HepG2 (cell line): ENCODE measurements at regions of chr13 and their contacts with region 1.

Region 1: GRCh38 chr13:96822895-96823294 is 171.4 kb downstream of the OXGR1 start:
- DNase-seq: peak; percentile 50
- ATAC-seq: peak; percentile 100
- H3K4me3 ChIP-seq: no peak overlapping the region
- H3K27ac ChIP-seq: no peak overlapping the region
- H3K4me1 ChIP-seq: no peaks in the 10 kb centered on the region
- H3K27me3 ChIP-seq: no peaks in the 10 kb centered on the region; a peak in 1 of 5 replicates
- CTCF ChIP-seq: peak; percentile 83
- EP300 ChIP-seq: no peak
- POLR2A ChIP-seq: no peak
- RAD21 ChIP-seq: peak; percentile 74

Region 2: DNA sequence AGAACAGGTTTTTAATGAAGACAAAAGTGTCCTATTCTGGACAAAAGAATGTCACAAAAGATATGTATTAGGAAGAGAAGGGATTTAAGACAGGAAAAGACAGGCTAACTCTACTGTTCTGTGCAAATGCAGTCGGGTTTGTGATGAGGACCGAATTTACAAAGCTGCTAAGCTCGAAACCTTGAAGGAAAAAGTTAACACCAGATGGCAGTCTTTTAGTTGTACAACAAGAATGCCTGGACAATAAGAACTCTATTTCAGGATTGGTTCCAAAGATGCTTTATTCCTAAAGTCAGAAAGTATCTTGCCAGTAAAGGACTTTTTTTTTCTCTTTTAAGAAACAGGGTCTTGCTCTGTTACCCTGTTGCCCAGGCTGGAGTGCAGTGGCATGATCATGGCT is 681.9 kb before region 1 on chr13:
- CTCF ChIA-PET with region 1: no interaction called
- POLR2A ChIA-PET with region 1: no interaction called
- in situ Hi-C with region 1: loop called (anchors 10 kb)
- intact Hi-C with region 1: loop called (anchors 5 kb)
- DNase-seq: peak; percentile 20
- ATAC-seq: no peak
- H3K4me3 ChIP-seq: no peak overlapping the region
- H3K27ac ChIP-seq: no peak overlapping the region
- H3K4me1 ChIP-seq: no peaks in the 10 kb centered on the region
- H3K27me3 ChIP-seq: no peaks in the 10 kb centered on the region
- CTCF ChIP-seq: peak; percentile 32; the same call in 1 of the 2 replicates
- EP300 ChIP-seq: no peak
- POLR2A ChIP-seq: no peak
- RAD21 ChIP-seq: no peak

Region 3: GRCh38 chr13:96958286-96958891 is 135.5 kb after region 1 on chr13:
- CTCF ChIA-PET with region 1: interaction called, 13 read pairs
- POLR2A ChIA-PET with region 1: no interaction called
- in situ Hi-C with region 1: loop called (anchors 5 kb)
- intact Hi-C with region 1: loop called (anchors 1 kb)
- DNase-seq: peak; percentile 20
- ATAC-seq: peak; percentile 36; the same call in 1 of the 3 replicates
- H3K4me3 ChIP-seq: no peak overlapping the region
- H3K27ac ChIP-seq: no peak overlapping the region
- H3K4me1 ChIP-seq: no peaks in the 10 kb centered on the region
- H3K27me3 ChIP-seq: no peaks in the 10 kb centered on the region
- CTCF ChIP-seq: peak; percentile 56
- EP300 ChIP-seq: no peak
- POLR2A ChIP-seq: no peak
- RAD21 ChIP-seq: no peak

Region 4: DNA sequence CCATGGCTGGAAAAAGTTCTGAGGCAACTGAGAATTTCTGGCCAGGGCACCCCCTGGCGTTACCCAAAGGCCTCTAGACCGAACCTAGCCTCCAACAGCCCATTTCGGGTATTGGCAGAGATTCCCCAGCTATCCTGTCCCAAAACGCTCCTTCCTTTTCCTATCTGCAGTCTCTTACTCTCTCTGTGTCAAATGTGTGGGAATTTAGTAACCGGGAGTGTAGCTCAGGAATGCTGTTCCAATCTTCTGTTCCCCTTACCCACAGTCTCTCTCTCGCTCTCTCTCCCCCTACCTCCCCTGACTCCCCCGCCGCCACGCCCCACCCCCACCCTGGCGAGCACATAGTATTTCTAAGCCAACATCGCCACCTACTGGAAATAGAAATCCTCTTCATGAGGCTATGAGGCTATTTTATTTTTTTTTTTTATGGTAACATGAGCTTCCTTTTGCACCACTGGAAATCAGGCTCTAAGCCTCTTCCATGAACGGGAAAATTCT is 144.4 kb after region 1 on chr13:
- CTCF ChIA-PET with region 1: interaction called, 15 read pairs
- POLR2A ChIA-PET with region 1: no interaction called
- in situ Hi-C with region 1: no loop called
- intact Hi-C with region 1: no loop called
- DNase-seq: peak; percentile 25
- ATAC-seq: peak; percentile 92
- H3K4me3 ChIP-seq: peak overlapping the region in 1 of 3 experiments; percentile 33; a peak in 3 of 6 replicates
- H3K27ac ChIP-seq: no peak overlapping the region
- H3K4me1 ChIP-seq: 0 out of 2 replicates have a peak, but pooled peaks cover 7% of the 10 kb centered on the region
- H3K27me3 ChIP-seq: no peaks in the 10 kb centered on the region; a peak in 2 of 5 replicates
- CTCF ChIP-seq: peak; percentile 52
- EP300 ChIP-seq: no peak
- POLR2A ChIP-seq: no peak
- RAD21 ChIP-seq: no peak

Region 5: DNA sequence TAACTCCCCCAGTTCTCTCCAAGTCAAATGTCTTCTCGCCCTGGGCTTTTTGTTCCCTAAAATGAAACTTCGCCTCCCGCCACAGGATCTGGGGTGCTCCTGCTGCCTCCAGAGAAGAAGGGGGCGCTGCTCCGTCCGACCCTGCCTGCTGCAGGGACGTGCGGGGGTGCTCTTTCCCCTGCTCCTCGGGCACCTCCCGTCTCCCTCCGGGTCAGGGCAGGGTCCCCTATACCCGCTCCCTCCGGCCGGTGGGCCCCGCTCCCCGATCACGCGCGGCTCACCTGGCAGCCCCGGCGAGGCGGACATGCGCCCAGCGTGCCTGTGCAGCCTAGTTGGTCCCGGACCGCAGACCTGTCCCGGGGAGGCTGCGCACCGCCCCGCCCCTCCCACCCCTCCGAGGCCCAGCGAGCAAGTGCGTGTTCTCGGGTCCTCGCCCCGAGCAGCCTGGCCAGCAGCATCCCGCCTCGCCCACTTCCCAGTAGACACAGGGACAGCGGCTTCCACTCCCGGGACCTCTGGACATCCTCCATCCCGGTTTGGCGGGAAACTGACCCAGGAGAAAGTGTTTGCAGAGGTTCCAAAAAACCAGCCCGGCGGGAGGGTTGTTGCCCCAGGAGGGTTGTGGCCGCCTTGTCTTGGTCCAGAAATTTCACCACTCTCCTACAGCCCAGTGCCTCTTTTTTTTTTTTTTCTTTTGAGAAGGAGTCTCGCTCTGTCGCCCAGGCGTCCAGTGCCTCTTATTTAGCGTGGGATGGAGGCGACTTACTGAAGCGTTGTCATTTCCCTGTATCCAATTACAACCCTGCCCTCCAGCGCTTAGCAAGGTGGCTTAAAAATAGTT is 171.3 kb after region 1 on chr13 and contains the start of gene OXGR1:
- CTCF ChIA-PET with region 1: no interaction called
- POLR2A ChIA-PET with region 1: no interaction called
- in situ Hi-C with region 1: no loop called
- intact Hi-C with region 1: no loop called
- DNase-seq: no peak
- ATAC-seq: no peak
- H3K4me3 ChIP-seq: no peak within 1 kb of the TSS
- H3K27ac ChIP-seq: no peak within 1 kb of the TSS
- H3K4me1 ChIP-seq: no peaks in the 10 kb centered on the region
- H3K27me3 ChIP-seq: peaks cover 1 to 15% of the 10 kb centered on the region in 2 experiments; a peak in 2 of 5 replicates
- CTCF ChIP-seq: no peak
- EP300 ChIP-seq: no peak
- POLR2A ChIP-seq: no peak
- RAD21 ChIP-seq: no peak
- total RNA-seq, gene OXGR1: not detected in 2 replicates